ENCODE measurements at regions of chr1 and their contacts with region 1.

Region 1: DNA sequence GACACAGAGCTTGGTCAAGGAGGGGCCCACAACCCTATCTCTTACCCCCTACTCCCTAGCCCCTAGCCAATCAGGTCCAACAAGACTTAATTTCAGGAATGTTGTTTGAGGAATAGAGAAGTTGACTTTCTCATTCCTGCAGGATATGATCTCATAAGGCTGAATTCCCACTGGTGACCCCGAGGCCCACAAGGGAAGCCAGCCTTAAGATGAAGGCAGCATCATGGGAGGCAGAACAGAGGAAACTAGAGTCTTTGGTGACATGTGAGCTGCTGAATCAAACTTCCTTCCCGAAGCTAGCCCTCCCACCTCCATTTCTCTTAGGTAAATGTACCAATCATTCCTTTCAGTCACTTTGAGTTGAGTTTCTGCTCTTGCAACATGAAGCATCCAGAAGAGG is 9.1 kb upstream of the PDIK1L start:
- DNase-seq: no peak
- H3K4me3 ChIP-seq: no peak overlapping the region
- H3K27ac ChIP-seq: no peak overlapping the region
- H3K4me1 ChIP-seq: no peaks in the 10 kb centered on the region
- H3K27me3 ChIP-seq: no peaks in the 10 kb centered on the region
- CTCF ChIP-seq: no peak
- POLR2A ChIP-seq: no peak

Region 2: GRCh38 chr1:26145041-26145959 is 42.8 kb after region 1 on chr1:
- intact Hi-C with region 1: loop called (anchors 1 kb)
- DNase-seq: peak; percentile 85
- H3K4me3 ChIP-seq: no peak overlapping the region
- H3K27ac ChIP-seq: no peak overlapping the region
- H3K4me1 ChIP-seq: no peaks in the 10 kb centered on the region
- H3K27me3 ChIP-seq: no peaks in the 10 kb centered on the region
- CTCF ChIP-seq: peak; percentile 33 to 85 (median 82)
- POLR2A ChIP-seq: no peak

Region 3: GRCh38 chr1:26161415-26162219 is 59.1 kb after region 1 on chr1:
- intact Hi-C with region 1: loop called (anchors 5 kb)
- DNase-seq: no peak
- H3K4me3 ChIP-seq: peak overlapping the region; percentile 24 to 45
- H3K27ac ChIP-seq: no peak overlapping the region
- H3K4me1 ChIP-seq: peaks cover 4% of the 10 kb centered on the region
- H3K27me3 ChIP-seq: no peaks in the 10 kb centered on the region
- CTCF ChIP-seq: peak in 1 of 4 experiments; percentile 49
- POLR2A ChIP-seq: no peak

Measured in prostate gland (tissue), 2 donors.